ENCODE measurements at regions of chr3 and their contacts with region 1.

Region 1: GRCh38 chr3:73056014-73056844 is 5.2 kb upstream of the EBLN2 start:
- DNase-seq: peak in 1 of 35 experiments; percentile 51
- ATAC-seq: no peak
- H3K4me3 ChIP-seq: no peak overlapping the region
- H3K4me3 Mint-ChIP-seq: no peak overlapping the region
- H3K27ac ChIP-seq: peak overlapping the region; percentile 41
- H3K27ac Mint-ChIP-seq: peak overlapping the region in 1 of 2 donors; percentile 54
- H3K4me1 ChIP-seq: no peaks in the 10 kb centered on the region
- H3K4me1 Mint-ChIP-seq: peaks cover 25 to 30% (median 28%) of the 10 kb centered on the region in 3 donors
- H3K27me3 ChIP-seq: no peaks in the 10 kb centered on the region
- H3K27me3 Mint-ChIP-seq: no peaks in the 10 kb centered on the region

Region 2: GRCh38 chr3:72847751-72848702 is 208.2 kb before region 1 on chr3 and contains the start of gene SHQ1:
- CTCF ChIA-PET with region 1: interaction called, 12 to 45 read pairs
- POLR2A ChIA-PET with region 1: no interaction called
- DNase-seq: peak; percentile 87 to 97 (median 92)
- ATAC-seq: peak; percentile 92 to 97 (median 96)
- H3K4me3 ChIP-seq: peak within 1 kb of the TSS; percentile 92 to 98
- H3K4me3 Mint-ChIP-seq: peak within 1 kb of the TSS; percentile 93 to 97 (median 95)
- H3K27ac ChIP-seq: peak within 1 kb of the TSS; percentile 52
- H3K27ac Mint-ChIP-seq: peak within 1 kb of the TSS; percentile 86 to 87
- H3K4me1 ChIP-seq: peaks cover 17 to 19% of the 10 kb centered on the region in 2 experiments
- H3K4me1 Mint-ChIP-seq: peaks cover 52 to 57% (median 54%) of the 10 kb centered on the region in 3 donors
- H3K27me3 ChIP-seq: no peaks in the 10 kb centered on the region
- H3K27me3 Mint-ChIP-seq: no peaks in the 10 kb centered on the region
- total RNA-seq, gene SHQ1: 16.6 to 29.0 (median 27.8) TPM

Region 3: DNA sequence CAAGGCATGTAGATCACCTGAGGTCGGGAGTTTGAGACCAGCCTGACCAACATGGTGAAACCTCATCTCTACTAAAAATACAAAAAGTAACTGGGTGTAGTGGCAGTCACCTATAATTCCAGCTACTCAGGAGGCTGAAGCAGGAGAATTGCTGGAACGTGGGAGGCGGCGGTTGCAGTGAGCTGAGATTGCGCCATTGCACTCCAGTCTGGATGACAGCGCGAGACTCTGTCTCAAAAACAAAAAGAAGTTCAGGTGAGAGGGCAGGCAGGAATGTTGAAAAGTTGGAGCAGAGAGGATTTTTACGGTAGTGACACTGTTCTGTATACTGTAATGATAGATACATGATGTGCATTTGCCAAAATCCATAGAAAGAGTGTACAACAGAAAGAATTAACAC is 136.7 kb before region 1 on chr3:
- CTCF ChIA-PET with region 1: no interaction called
- POLR2A ChIA-PET with region 1: no interaction called
- DNase-seq: no peak
- ATAC-seq: no peak
- H3K4me3 ChIP-seq: no peak overlapping the region
- H3K4me3 Mint-ChIP-seq: no peak overlapping the region
- H3K27ac ChIP-seq: no peak overlapping the region
- H3K27ac Mint-ChIP-seq: no peak overlapping the region
- H3K4me1 ChIP-seq: no peaks in the 10 kb centered on the region
- H3K4me1 Mint-ChIP-seq: no peaks in the 10 kb centered on the region
- H3K27me3 ChIP-seq: peaks cover 0 to 11% of the 10 kb centered on the region in 2 experiments
- H3K27me3 Mint-ChIP-seq: peaks cover 5 to 7% of the 10 kb centered on the region in 2 donors

Region 4: GRCh38 chr3:72938471-72939265 is 117.6 kb before region 1 on chr3:
- CTCF ChIA-PET with region 1: interaction called, 27 to 59 read pairs
- POLR2A ChIA-PET with region 1: no interaction called
- DNase-seq: peak in 31 of 35 experiments; percentile 3 to 69 (median 14)
- ATAC-seq: peak; percentile 81 to 100 (median 89)
- H3K4me3 ChIP-seq: no peak overlapping the region
- H3K4me3 Mint-ChIP-seq: no peak overlapping the region
- H3K27ac ChIP-seq: no peak overlapping the region
- H3K27ac Mint-ChIP-seq: no peak overlapping the region
- H3K4me1 ChIP-seq: no peaks in the 10 kb centered on the region
- H3K4me1 Mint-ChIP-seq: peaks cover 0 to 2% (median 0%) of the 10 kb centered on the region in 3 donors
- H3K27me3 ChIP-seq: peaks cover 0 to under 1% of the 10 kb centered on the region in 2 experiments
- H3K27me3 Mint-ChIP-seq: peaks cover 0 to 7% of the 10 kb centered on the region in 2 donors

Region 5: DNA sequence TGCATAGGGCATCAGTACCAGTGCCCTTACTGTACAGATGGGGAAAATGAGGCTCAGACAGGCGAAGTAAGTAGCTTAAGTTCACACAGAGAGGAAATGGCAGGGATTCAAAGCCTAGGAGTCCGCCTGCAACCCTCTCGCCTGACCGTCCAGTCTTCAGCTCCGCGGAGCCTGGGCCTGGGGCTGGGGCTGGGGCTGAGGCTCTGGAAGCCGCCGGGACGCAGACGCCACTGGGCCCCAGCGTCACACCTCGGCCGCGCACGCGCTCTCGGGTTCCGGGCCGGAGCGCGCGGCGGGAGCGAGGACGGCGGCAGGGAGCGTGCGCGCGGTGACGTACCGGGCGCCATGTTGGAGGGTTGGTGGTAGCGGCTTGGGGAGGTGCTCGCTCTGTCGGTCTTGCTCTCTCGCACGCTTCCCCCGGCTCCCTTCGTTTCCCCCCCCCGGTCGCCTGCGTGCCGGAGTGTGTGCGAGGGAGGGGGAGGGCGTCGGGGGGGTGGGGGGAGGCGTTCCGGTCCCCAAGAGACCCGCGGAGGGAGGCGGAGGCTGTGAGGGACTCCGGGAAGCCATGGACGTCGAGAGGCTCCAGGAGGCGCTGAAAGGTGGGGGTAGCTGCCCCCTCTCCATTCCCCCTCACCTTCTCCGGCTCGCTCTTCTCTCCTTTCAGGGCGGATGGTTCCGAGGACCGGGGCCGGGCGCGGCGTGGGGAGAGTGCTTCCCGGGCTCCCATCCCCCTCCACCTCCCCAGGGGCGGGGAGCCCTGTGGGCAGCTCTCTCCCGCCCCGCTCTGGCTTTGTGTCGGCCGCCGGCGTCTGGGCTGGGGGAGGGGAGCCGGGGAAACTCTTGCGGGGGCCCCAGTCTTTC is 59.5 kb before region 1 on chr3 and contains the start of gene PPP4R2:
- CTCF ChIA-PET with region 1: interaction called, 4 to 30 read pairs
- POLR2A ChIA-PET with region 1: interaction called in 1 of 2 experiments, 10 read pairs
- DNase-seq: peak; percentile 86 to 97 (median 92)
- ATAC-seq: peak; percentile 89 to 90 (median 90)
- H3K4me3 ChIP-seq: peak within 1 kb of the TSS; percentile 82 to 87
- H3K4me3 Mint-ChIP-seq: peak within 1 kb of the TSS; percentile 83 to 89 (median 88)
- H3K27ac ChIP-seq: peak within 1 kb of the TSS; percentile 85
- H3K27ac Mint-ChIP-seq: peak within 1 kb of the TSS; percentile 84 to 89
- H3K4me1 ChIP-seq: peaks cover 24 to 35% of the 10 kb centered on the region in 2 experiments
- H3K4me1 Mint-ChIP-seq: peaks cover 40 to 46% (median 45%) of the 10 kb centered on the region in 3 donors
- H3K27me3 ChIP-seq: no peaks in the 10 kb centered on the region
- H3K27me3 Mint-ChIP-seq: no peaks in the 10 kb centered on the region
- total RNA-seq, gene PPP4R2: 53.3 to 70.6 (median 61.3) TPM

Measured in T-cell (primary cell).